Caco-2 (cell line): ENCODE measurements at regions of chr11 and their contacts with region 1.

Region 1: DNA sequence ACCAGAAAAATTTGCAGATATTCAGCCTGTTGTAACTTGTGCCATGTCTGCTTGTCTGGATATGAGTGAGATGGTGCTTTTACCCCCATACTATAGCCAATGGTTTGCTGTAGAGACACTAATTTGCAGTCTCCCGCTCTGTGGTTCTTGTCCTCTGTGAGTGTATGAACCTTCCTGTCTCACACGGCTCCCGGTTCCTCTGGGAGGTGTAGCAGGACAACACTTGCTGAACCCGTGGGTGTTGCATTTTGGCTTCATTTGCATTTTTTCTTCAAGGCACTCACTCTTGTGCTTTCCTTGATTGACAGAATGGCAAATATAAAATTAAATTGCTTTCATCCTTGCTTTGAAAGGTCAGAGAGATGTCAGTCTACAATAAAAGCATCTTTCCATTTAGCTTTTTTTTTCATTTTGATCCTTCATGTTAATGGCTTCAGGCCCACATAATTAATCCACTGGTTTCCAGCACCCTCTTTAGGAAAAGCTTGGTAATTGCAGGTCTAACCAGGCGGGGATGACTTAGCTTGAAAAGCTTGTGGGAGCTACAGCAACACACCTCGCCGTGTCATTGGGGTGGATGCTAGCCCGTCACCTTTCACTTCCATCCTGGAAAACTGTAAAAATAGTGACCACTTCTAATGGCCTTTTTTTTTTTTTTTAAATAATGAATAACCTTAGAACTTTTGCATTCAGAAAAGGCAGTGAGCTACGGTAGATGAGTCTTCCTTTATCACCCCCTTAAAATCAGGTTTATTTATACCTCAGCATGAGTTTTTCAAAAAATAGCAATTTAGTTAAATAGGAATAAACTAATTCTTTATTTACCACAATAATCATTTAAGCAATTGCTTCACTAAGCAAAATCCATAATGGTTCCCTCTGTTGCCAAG is 27.4 kb upstream of the ST14 start:
- DNase-seq: peak; percentile 75 to 85
- H3K4me3 ChIP-seq: no peak overlapping the region
- H3K4me3 Mint-ChIP-seq: no peak overlapping the region
- H3K27ac Mint-ChIP-seq: peak overlapping the region; percentile 45
- H3K4me1 ChIP-seq: peaks cover 18% of the 10 kb centered on the region
- H3K4me1 Mint-ChIP-seq: peaks cover 25% of the 10 kb centered on the region
- H3K27me3 ChIP-seq: no peaks in the 10 kb centered on the region
- H3K27me3 Mint-ChIP-seq: no peaks in the 10 kb centered on the region
- CTCF ChIP-seq: peak; percentile 90 to 95

Region 2: GRCh38 chr11:129785383-129786111 is 346.7 kb before region 1 on chr11:
- CTCF ChIA-PET with region 1: no interaction called
- POLR2A ChIA-PET with region 1: no interaction called
- intact Hi-C with region 1: loop called (anchors 5 kb)
- DNase-seq: peak in 1 of 2 experiments; percentile 66
- H3K4me3 ChIP-seq: no peak overlapping the region
- H3K4me3 Mint-ChIP-seq: no peak overlapping the region
- H3K27ac Mint-ChIP-seq: peak overlapping the region; percentile 4
- H3K4me1 ChIP-seq: peaks cover 18% of the 10 kb centered on the region
- H3K4me1 Mint-ChIP-seq: peaks cover 18% of the 10 kb centered on the region
- H3K27me3 ChIP-seq: no peaks in the 10 kb centered on the region
- H3K27me3 Mint-ChIP-seq: no peaks in the 10 kb centered on the region
- CTCF ChIP-seq: peak; percentile 2 to 52

Region 3: GRCh38 chr11:129917231-129917630 is 215.0 kb before region 1 on chr11:
- CTCF ChIA-PET with region 1: interaction called, 17 read pairs
- POLR2A ChIA-PET with region 1: interaction called, 3 read pairs
- intact Hi-C with region 1: no loop called
- DNase-seq: no peak
- H3K4me3 ChIP-seq: no peak overlapping the region
- H3K4me3 Mint-ChIP-seq: no peak overlapping the region
- H3K27ac Mint-ChIP-seq: no peak overlapping the region
- H3K4me1 ChIP-seq: no peaks in the 10 kb centered on the region
- H3K4me1 Mint-ChIP-seq: no peaks in the 10 kb centered on the region
- H3K27me3 ChIP-seq: no peaks in the 10 kb centered on the region
- H3K27me3 Mint-ChIP-seq: no peaks in the 10 kb centered on the region
- CTCF ChIP-seq: no peak

Region 4: DNA sequence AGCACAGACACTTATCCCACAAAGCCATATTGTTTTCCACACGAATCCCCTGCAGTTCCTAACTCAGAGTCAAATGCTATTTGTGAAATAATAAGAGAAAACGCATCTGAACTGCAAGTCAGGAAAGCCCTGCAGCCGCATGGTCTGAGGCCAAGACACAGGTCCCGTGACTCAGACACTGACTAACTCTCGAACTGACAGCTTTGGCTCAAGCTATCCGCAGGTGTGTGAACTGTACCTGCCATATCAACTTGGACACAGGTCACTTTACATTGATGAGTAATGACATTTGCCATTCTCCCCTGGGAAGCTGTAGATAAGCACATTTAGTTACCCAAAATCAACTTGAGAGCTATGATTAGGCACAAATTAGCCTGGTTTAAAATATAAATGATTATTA is 201.9 kb before region 1 on chr11:
- CTCF ChIA-PET with region 1: interaction called, 73 read pairs
- POLR2A ChIA-PET with region 1: no interaction called
- intact Hi-C with region 1: no loop called
- DNase-seq: no peak
- H3K4me3 ChIP-seq: no peak overlapping the region
- H3K4me3 Mint-ChIP-seq: no peak overlapping the region
- H3K27ac Mint-ChIP-seq: no peak overlapping the region
- H3K4me1 ChIP-seq: no peaks in the 10 kb centered on the region
- H3K4me1 Mint-ChIP-seq: no peaks in the 10 kb centered on the region
- H3K27me3 ChIP-seq: no peaks in the 10 kb centered on the region
- H3K27me3 Mint-ChIP-seq: no peaks in the 10 kb centered on the region
- CTCF ChIP-seq: no peak

Region 5: GRCh38 chr11:129992161-129992944 is 139.9 kb before region 1 on chr11:
- CTCF ChIA-PET with region 1: interaction called, 51 read pairs
- POLR2A ChIA-PET with region 1: interaction called, 4 read pairs
- intact Hi-C with region 1: loop called (anchors 1 kb)
- DNase-seq: peak; percentile 80 to 82
- H3K4me3 ChIP-seq: no peak overlapping the region
- H3K4me3 Mint-ChIP-seq: no peak overlapping the region
- H3K27ac Mint-ChIP-seq: peak overlapping the region; percentile 35
- H3K4me1 ChIP-seq: peaks cover 13% of the 10 kb centered on the region
- H3K4me1 Mint-ChIP-seq: peaks cover 28% of the 10 kb centered on the region
- H3K27me3 ChIP-seq: no peaks in the 10 kb centered on the region
- H3K27me3 Mint-ChIP-seq: no peaks in the 10 kb centered on the region
- CTCF ChIP-seq: peak in 1 of 2 experiments; percentile 84

Region 6: GRCh38 chr11:130076778-130077481 is 55.3 kb before region 1 on chr11:
- CTCF ChIA-PET with region 1: interaction called, 18 read pairs
- POLR2A ChIA-PET with region 1: interaction called, 8 read pairs
- intact Hi-C with region 1: no loop called
- DNase-seq: peak; percentile 67 to 75
- H3K4me3 ChIP-seq: no peak overlapping the region
- H3K4me3 Mint-ChIP-seq: peak overlapping the region; percentile 48
- H3K27ac Mint-ChIP-seq: peak overlapping the region; percentile 84
- H3K4me1 ChIP-seq: peaks cover 80% of the 10 kb centered on the region
- H3K4me1 Mint-ChIP-seq: peaks cover 41% of the 10 kb centered on the region
- H3K27me3 ChIP-seq: no peaks in the 10 kb centered on the region
- H3K27me3 Mint-ChIP-seq: no peaks in the 10 kb centered on the region
- CTCF ChIP-seq: no peak

Region 7: DNA sequence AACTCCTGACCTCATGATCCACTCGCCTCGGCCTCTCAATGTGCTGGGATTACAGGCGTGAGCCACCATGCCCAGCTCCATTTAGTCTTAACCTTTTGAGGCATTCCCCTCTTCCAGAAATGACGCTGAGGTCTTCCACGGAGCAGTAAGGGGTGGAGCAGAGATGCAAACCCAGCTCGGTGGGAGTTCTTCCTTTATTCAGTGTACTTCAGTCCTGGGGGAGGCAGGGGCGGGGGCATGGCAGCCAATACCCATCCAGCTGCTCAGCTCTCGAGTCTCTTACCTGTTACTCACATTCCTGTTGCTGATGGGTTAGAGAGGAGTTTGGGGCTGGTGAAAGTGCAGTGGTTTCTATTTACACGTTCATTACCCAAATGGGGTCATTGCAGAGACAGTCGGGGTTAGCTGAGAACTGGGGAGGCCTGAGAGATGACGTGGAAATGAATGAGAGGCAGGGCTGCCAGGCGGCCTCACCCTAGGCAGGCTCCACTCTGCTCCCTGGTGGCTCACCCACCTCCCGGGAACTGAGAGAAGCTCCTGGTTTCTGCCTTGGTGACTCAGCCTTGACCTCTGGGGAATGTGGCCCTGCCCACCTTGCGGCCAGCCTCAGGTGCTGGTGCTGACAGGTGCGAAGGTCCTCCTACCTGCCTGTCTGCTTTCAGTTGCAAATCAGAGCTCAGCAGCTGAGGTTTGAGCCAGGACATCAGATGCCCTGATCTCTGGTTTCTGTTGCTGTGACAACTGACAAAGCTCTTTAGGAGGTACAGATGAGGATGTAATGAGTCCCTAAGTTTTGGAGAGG is 14.0 kb after region 1 on chr11:
- CTCF ChIA-PET with region 1: interaction called, 71 read pairs
- POLR2A ChIA-PET with region 1: interaction called, 4 read pairs
- intact Hi-C with region 1: loop called (anchors 1 kb)
- DNase-seq: peak; percentile 98
- H3K4me3 ChIP-seq: no peak overlapping the region
- H3K4me3 Mint-ChIP-seq: peak overlapping the region; percentile 30
- H3K27ac Mint-ChIP-seq: peak overlapping the region; percentile 87
- H3K4me1 ChIP-seq: peaks cover 59% of the 10 kb centered on the region
- H3K4me1 Mint-ChIP-seq: peaks cover 69% of the 10 kb centered on the region
- H3K27me3 ChIP-seq: no peaks in the 10 kb centered on the region
- H3K27me3 Mint-ChIP-seq: no peaks in the 10 kb centered on the region
- CTCF ChIP-seq: peak; percentile 66 to 94

Region 8: GRCh38 chr11:130202009-130202817 is 70.0 kb after region 1 on chr11:
- CTCF ChIA-PET with region 1: no interaction called
- POLR2A ChIA-PET with region 1: no interaction called
- intact Hi-C with region 1: no loop called
- DNase-seq: no peak
- H3K4me3 ChIP-seq: no peak overlapping the region
- H3K4me3 Mint-ChIP-seq: no peak overlapping the region
- H3K27ac Mint-ChIP-seq: no peak overlapping the region
- H3K4me1 ChIP-seq: no peaks in the 10 kb centered on the region
- H3K4me1 Mint-ChIP-seq: no peaks in the 10 kb centered on the region
- H3K27me3 ChIP-seq: no peaks in the 10 kb centered on the region
- H3K27me3 Mint-ChIP-seq: no peaks in the 10 kb centered on the region
- CTCF ChIP-seq: no peak

Region 9: GRCh38 chr11:130381317-130381716 is 249.1 kb after region 1 on chr11:
- CTCF ChIA-PET with region 1: no interaction called
- POLR2A ChIA-PET with region 1: no interaction called
- intact Hi-C with region 1: no loop called
- DNase-seq: peak in 1 of 2 experiments; percentile 24
- H3K4me3 ChIP-seq: no peak overlapping the region
- H3K4me3 Mint-ChIP-seq: no peak overlapping the region
- H3K27ac Mint-ChIP-seq: no peak overlapping the region
- H3K4me1 ChIP-seq: peaks cover 35% of the 10 kb centered on the region
- H3K4me1 Mint-ChIP-seq: peaks cover 29% of the 10 kb centered on the region
- H3K27me3 ChIP-seq: no peaks in the 10 kb centered on the region
- H3K27me3 Mint-ChIP-seq: no peaks in the 10 kb centered on the region
- CTCF ChIP-seq: no peak